ENCODE measurements at regions of chr10 and their contacts with region 1.

Region 1: DNA sequence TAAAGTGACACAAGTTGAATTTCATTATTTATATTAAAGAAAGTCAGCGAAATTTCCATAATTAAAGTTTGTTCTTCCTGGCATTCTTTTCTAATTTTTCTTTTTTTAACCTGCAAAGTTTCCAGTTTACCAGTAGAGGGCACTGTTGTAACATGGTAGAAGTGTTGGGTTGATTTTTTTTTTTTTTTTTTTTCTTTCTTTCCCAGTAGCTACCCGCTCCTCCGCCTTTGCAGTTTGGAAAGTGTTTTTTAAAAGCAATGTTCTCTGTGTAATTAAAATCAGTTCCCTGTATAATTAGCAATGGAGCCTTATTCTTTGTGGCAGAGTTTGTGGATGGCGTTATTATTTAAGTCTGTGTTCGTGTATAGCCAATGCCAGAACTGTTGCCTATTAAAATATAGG is 53.7 kb downstream of the TAF3 start:
- DNase-seq: no peak
- H3K4me3 ChIP-seq: no peak overlapping the region
- H3K27ac ChIP-seq: no peak overlapping the region
- H3K4me1 ChIP-seq: no peaks in the 10 kb centered on the region
- H3K27me3 ChIP-seq: no peaks in the 10 kb centered on the region
- CTCF ChIP-seq: peak; percentile 83

Region 2: DNA sequence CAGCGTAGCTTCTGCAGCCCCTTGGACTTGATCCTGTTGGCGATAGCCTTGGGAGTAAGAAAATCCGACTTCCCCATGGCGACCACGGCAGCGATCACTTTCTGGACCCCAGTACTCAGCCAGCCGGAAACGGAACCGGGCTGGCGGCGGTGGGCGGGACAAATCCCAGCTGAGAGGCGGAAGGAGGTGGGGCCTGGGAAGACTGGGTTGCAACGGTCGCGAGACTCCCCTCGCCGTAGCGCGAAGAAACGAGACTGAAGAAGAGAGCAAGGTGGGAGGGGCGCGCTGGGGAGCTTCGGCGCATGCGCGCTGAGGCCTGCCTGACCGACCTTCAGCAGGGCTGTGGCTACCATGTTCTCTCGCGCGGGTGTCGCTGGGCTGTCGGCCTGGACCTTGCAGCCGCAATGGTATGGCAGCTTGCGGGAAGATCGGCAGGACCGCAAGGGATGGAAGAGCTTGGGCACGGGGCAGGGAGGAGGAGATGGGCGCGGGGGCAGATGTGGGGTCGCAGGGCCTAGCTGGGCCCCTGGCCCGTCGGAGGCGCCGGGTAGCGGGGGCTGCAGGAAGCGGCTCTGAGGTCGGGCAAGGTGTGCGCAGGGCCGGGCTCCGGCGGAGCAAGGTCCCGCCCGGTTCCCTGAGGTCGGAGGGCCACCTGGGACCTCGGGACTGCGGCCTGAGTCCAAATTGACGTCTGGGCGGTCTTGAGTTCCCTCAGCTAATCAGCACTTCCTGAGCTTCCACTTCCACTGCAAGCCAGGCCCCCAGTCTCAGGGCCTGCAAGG is 84.0 kb before region 1 on chr10 and contains the starts of genes ATP5F1C and KIN:
- intact Hi-C with region 1: no loop called
- DNase-seq: peak; percentile 98
- H3K4me3 ChIP-seq: peak within 1 kb of the TSS; percentile 95
- H3K27ac ChIP-seq: peak within 1 kb of the TSS; percentile 60
- H3K4me1 ChIP-seq: peaks cover 26% of the 10 kb centered on the region
- H3K27me3 ChIP-seq: no peaks in the 10 kb centered on the region
- CTCF ChIP-seq: no peak
- total RNA-seq, gene ATP5F1C: 444 to 610 TPM
- total RNA-seq, gene KIN: 10.9 to 11.6 TPM

Region 3: GRCh38 chr10:7998831-7999230 is 126.8 kb after region 1 on chr10:
- intact Hi-C with region 1: no loop called
- DNase-seq: no peak
- H3K4me3 ChIP-seq: no peak overlapping the region
- H3K27ac ChIP-seq: no peak overlapping the region
- H3K4me1 ChIP-seq: no peaks in the 10 kb centered on the region
- H3K27me3 ChIP-seq: no peaks in the 10 kb centered on the region
- CTCF ChIP-seq: no peak

Region 4: DNA sequence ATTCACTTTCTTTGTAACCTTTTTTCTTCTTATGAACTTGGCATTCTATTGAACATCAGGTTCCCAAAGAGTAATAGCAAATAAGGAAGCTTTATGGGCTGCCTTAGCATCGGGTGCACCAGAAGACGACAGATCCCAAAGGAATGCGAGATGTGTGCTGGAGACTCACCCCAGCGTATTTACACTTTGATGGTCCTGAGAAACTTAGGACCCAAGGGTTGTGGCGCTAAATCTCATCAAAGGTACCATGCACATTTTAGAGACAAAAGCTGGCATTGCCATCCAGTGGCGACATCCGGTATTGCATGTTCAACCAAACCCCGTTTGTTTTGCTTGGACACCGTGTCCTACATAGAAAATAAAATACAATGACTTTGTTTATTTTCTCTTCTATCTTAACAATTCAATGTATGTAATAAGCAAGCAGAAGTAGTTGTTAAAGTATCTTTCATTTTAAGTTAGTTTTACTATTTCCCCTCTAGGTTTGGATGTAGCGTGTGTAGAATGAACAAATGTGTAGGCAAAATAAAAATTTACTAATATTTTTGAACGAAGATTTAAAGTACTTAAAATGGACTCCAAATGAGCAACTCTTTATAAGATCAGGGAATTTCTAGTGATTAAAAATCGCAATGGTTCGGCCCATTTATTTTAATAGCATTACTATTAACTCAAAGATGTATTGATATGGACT is 1337.2 kb after region 1 on chr10:
- intact Hi-C with region 1: loop called (anchors 5 kb)
- DNase-seq: peak; percentile 57
- H3K4me3 ChIP-seq: no peak overlapping the region
- H3K27ac ChIP-seq: no peak overlapping the region
- H3K4me1 ChIP-seq: no peaks in the 10 kb centered on the region
- H3K27me3 ChIP-seq: no peaks in the 10 kb centered on the region
- CTCF ChIP-seq: peak; percentile 84